B cell (primary cell): ENCODE measurements at regions of chr1 and their contacts with region 1.

Region 1: GRCh38 chr1:64864018-64864940 is 102.1 kb downstream of the JAK1 start:
- DNase-seq: peak; percentile 92
- ATAC-seq: peak; percentile 95
- H3K4me3 ChIP-seq: peak overlapping the region in 2 of 5 experiments; percentile 2 to 5
- H3K4me3 Mint-ChIP-seq: peak overlapping the region; percentile 77
- H3K27ac ChIP-seq: peak overlapping the region; percentile 74 to 79
- H3K27ac Mint-ChIP-seq: peak overlapping the region; percentile 90
- H3K4me1 ChIP-seq: peaks cover 63 to 66% of the 10 kb centered on the region in 2 donors
- H3K4me1 Mint-ChIP-seq: peaks cover 75% of the 10 kb centered on the region
- H3K27me3 ChIP-seq: no peaks in the 10 kb centered on the region
- H3K27me3 Mint-ChIP-seq: no peaks in the 10 kb centered on the region
- CTCF ChIP-seq: no peak

Region 2: GRCh38 chr1:64686828-64687724 is 177.2 kb before region 1 on chr1:
- CTCF ChIA-PET with region 1: no interaction called
- POLR2A ChIA-PET with region 1: no interaction called
- intact Hi-C with region 1: no loop called
- DNase-seq: peak; percentile 55
- ATAC-seq: peak; percentile 69
- H3K4me3 ChIP-seq: no peak overlapping the region
- H3K4me3 Mint-ChIP-seq: no peak overlapping the region
- H3K27ac ChIP-seq: no peak overlapping the region
- H3K27ac Mint-ChIP-seq: no peak overlapping the region
- H3K4me1 ChIP-seq: no peaks in the 10 kb centered on the region
- H3K4me1 Mint-ChIP-seq: no peaks in the 10 kb centered on the region
- H3K27me3 ChIP-seq: no peaks in the 10 kb centered on the region
- H3K27me3 Mint-ChIP-seq: peaks cover 11% of the 10 kb centered on the region
- CTCF ChIP-seq: peak; percentile 89

Region 3: GRCh38 chr1:64898107-64898845 is 34.0 kb after region 1 on chr1:
- CTCF ChIA-PET with region 1: no interaction called
- POLR2A ChIA-PET with region 1: no interaction called
- intact Hi-C with region 1: loop called (anchors 5 kb)
- DNase-seq: peak; percentile 25
- ATAC-seq: peak; percentile 53
- H3K4me3 ChIP-seq: peak overlapping the region in 1 of 5 experiments; percentile 10
- H3K4me3 Mint-ChIP-seq: peak overlapping the region; percentile 43
- H3K27ac ChIP-seq: peak overlapping the region in 1 of 2 donors; percentile 20
- H3K27ac Mint-ChIP-seq: peak overlapping the region; percentile 47
- H3K4me1 ChIP-seq: peaks cover 76 to 80% of the 10 kb centered on the region in 2 donors
- H3K4me1 Mint-ChIP-seq: peaks cover 90% of the 10 kb centered on the region
- H3K27me3 ChIP-seq: no peaks in the 10 kb centered on the region
- H3K27me3 Mint-ChIP-seq: no peaks in the 10 kb centered on the region
- CTCF ChIP-seq: no peak

Region 4: GRCh38 chr1:65002508-65003315 is 138.4 kb after region 1 on chr1:
- CTCF ChIA-PET with region 1: interaction called, 3 read pairs
- POLR2A ChIA-PET with region 1: interaction called, 8 read pairs
- intact Hi-C with region 1: loop called (anchors 1 kb)
- DNase-seq: peak; percentile 75
- ATAC-seq: peak; percentile 76
- H3K4me3 ChIP-seq: peak overlapping the region; percentile 39 to 74 (median 61)
- H3K4me3 Mint-ChIP-seq: peak overlapping the region; percentile 86
- H3K27ac ChIP-seq: peak overlapping the region in 1 of 2 donors; percentile 14
- H3K27ac Mint-ChIP-seq: peak overlapping the region; percentile 37
- H3K4me1 ChIP-seq: peaks cover 19 to 23% of the 10 kb centered on the region in 2 donors
- H3K4me1 Mint-ChIP-seq: peaks cover 26% of the 10 kb centered on the region
- H3K27me3 ChIP-seq: peaks cover 0 to 18% (median 5%) of the 10 kb centered on the region in 4 experiments
- H3K27me3 Mint-ChIP-seq: no peaks in the 10 kb centered on the region
- CTCF ChIP-seq: no peak

Region 5: DNA sequence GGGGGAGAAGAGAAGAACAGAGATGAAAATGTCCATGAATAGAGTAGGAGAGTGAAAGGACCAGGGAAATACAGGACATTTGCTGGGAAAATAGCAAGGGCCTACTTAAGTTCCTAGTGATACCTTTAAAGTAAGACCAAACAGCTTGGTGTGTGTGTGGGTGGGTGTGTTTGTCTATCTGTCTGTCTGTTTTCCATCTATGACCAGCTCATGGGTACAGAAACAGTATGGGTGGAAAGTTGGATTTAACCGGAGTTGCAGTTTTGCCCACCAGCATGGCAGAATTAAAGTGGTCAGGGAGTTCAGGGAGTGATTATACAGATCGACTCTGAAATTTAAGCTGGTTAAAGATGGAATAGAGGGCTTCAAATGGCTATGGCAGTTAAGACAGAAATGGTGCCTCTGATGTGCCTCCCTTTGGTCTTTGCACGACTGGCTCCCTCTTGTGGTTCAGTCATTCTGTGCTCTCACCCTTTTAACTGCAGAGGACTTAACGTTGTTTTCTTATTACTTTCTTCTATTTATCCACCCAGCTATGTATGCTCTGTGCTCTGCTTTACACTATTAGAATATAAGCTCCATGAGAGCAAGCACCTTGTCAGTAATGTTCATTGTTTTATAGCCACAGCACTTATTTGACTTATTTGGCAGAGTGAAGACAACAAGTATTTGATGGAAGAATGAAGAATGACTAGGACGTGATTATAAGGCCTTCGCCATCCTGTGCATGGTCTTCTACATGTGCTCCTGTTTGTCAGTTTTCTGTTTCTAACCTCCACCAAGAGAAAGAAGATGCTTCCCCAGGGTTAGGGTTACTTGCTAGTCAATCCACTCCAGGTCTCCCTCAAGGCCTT is 211.1 kb after region 1 on chr1:
- CTCF ChIA-PET with region 1: interaction called, 12 read pairs
- POLR2A ChIA-PET with region 1: no interaction called
- intact Hi-C with region 1: no loop called
- DNase-seq: peak; percentile 80
- ATAC-seq: peak; percentile 92
- H3K4me3 ChIP-seq: no peak overlapping the region
- H3K4me3 Mint-ChIP-seq: no peak overlapping the region
- H3K27ac ChIP-seq: no peak overlapping the region
- H3K27ac Mint-ChIP-seq: no peak overlapping the region
- H3K4me1 ChIP-seq: no peaks in the 10 kb centered on the region
- H3K4me1 Mint-ChIP-seq: no peaks in the 10 kb centered on the region
- H3K27me3 ChIP-seq: peaks cover 0 to 2% (median 0%) of the 10 kb centered on the region in 4 experiments
- H3K27me3 Mint-ChIP-seq: peaks cover 19% of the 10 kb centered on the region
- CTCF ChIP-seq: peak; percentile 80